Dendritic cell treated with granulocyte-macrophage colony-stimulating factor and Interleukin-4, amounts not matched to agents 40 ng/mL and 50 ng/mL, for 4 days (primary cell): ENCODE measurements at regions of chr3 and their contacts with region 1.

Region 1: GRCh38 chr3:196073188-196073838 is 8.6 kb downstream of the TFRC start:
- H3K4me3 Mint-ChIP-seq: no peak overlapping the region
- H3K27ac Mint-ChIP-seq: no peak overlapping the region
- H3K4me1 Mint-ChIP-seq: peaks cover 5% of the 10 kb centered on the region
- H3K27me3 Mint-ChIP-seq: no peaks in the 10 kb centered on the region

Region 2: GRCh38 chr3:196195664-196196265 is 122.5 kb after region 1 on chr3:
- intact Hi-C with region 1: loop called (anchors 1 kb)
- H3K4me3 Mint-ChIP-seq: no peak overlapping the region
- H3K27ac Mint-ChIP-seq: peak overlapping the region; percentile 91
- H3K4me1 Mint-ChIP-seq: peaks cover 41% of the 10 kb centered on the region
- H3K27me3 Mint-ChIP-seq: no peaks in the 10 kb centered on the region